B cell (primary cell): ENCODE measurements at regions of chr11 and their contacts with region 1.

Region 1: DNA sequence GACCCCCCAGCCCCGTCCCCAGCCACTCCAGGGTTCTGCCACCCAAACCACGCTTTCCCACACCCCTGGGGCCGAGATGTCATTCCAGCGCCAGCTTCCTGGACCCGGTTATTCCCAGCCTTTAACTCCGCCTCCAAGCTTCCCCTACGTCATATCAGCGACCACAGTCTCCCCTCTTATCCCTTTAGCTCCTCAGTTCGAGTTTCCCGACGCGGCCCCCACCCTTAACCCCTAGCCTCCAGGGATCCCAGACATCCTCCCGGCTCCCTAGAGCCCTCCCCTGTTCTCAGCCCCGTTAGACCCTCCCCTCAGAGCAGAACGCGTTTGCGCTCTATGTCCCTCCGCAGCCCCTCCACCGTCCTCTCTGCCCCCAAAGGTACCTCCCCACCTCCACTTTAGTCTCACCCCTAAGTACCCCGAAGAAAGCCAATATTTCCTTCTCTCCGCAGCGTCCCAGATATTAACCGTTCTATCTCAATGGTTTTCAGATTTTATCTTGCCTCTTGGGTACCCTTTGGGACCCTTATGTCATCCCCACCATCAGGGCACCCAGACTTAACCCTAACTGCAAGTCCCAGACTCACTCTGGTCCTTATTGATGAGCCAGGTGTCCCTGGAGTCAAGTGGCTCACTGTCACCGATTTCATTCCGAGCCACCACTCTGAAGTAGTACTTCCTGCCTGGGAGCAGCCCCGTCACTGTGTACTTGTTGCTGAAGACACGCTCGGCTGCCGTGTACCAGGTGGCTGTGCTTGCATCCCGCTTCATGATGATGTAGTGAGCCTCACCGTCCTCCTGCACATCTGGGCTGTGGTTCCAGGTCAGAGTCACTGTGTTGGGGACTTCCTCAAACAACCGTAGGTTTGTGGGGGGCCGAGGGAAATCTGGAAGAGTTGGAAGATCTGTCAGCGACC is 8.0 kb downstream of the TMEM86A start:
- DNase-seq: peak; percentile 88
- ATAC-seq: peak; percentile 74
- H3K4me3 ChIP-seq: peak overlapping the region in 4 of 5 experiments; percentile 54 to 95 (median 68)
- H3K4me3 Mint-ChIP-seq: peak overlapping the region; percentile 95
- H3K27ac ChIP-seq: peak overlapping the region in 1 of 2 donors; percentile 69
- H3K27ac Mint-ChIP-seq: peak overlapping the region; percentile 88
- H3K4me1 ChIP-seq: peaks cover 18 to 19% of the 10 kb centered on the region in 2 donors
- H3K4me1 Mint-ChIP-seq: peaks cover 22% of the 10 kb centered on the region
- H3K27me3 ChIP-seq: peaks cover 0 to 8% (median 0%) of the 10 kb centered on the region in 4 experiments
- H3K27me3 Mint-ChIP-seq: peaks cover 19% of the 10 kb centered on the region
- CTCF ChIP-seq: no peak

Region 2: DNA sequence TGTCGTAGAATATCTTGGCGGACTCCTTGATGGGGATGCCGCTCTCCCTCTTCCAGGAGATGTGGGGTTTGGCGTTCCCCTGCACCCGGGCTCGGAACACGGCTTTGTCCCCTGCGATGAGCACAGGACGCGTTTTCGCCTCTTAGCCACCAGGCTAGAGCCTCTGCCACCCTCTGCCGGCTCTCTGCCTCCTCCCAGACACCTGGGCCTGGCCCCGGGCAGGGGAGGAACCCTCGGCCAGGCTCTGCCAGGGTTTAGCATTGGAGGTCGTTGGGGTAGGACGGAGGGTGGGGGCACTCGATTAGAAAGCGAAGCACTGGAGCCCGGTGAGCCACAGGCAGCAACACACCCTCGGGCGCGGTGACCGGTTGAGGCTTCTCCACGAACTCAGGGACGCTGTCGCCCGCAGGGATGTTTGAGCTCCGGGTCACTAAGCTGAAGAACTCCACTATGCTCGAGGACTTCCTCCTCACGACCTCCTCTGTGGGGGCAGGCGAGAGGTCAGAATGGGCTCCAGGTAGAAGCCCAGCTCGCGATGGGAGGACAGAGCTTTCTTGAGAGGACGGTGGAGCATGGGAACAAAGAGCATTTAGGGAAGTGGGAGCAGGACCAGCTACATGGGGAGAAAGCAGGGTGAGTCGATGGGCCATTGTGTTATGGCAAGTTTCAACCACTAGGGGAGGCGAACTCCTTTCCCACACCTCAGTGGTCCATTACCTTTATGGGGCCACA is 15.1 kb after region 1 on chr11:
- CTCF ChIA-PET with region 1: interaction called, 27 read pairs
- POLR2A ChIA-PET with region 1: no interaction called
- intact Hi-C with region 1: loop called (anchors 1 kb)
- DNase-seq: peak; percentile 77
- ATAC-seq: peak; percentile 66
- H3K4me3 ChIP-seq: peak overlapping the region; percentile 24 to 80 (median 69)
- H3K4me3 Mint-ChIP-seq: peak overlapping the region; percentile 92
- H3K27ac ChIP-seq: peak overlapping the region in 1 of 2 donors; percentile 11
- H3K27ac Mint-ChIP-seq: peak overlapping the region; percentile 42
- H3K4me1 ChIP-seq: peaks cover 9 to 17% of the 10 kb centered on the region in 2 donors
- H3K4me1 Mint-ChIP-seq: peaks cover 9% of the 10 kb centered on the region
- H3K27me3 ChIP-seq: no peaks in the 10 kb centered on the region
- H3K27me3 Mint-ChIP-seq: peaks cover 6% of the 10 kb centered on the region
- CTCF ChIP-seq: peak; percentile 88

Region 3: GRCh38 chr11:19571906-19572305 is 865.3 kb after region 1 on chr11:
- CTCF ChIA-PET with region 1: no interaction called
- POLR2A ChIA-PET with region 1: no interaction called
- intact Hi-C with region 1: no loop called
- DNase-seq: no peak
- ATAC-seq: no peak
- H3K4me3 ChIP-seq: no peak overlapping the region
- H3K4me3 Mint-ChIP-seq: no peak overlapping the region
- H3K27ac ChIP-seq: no peak overlapping the region
- H3K27ac Mint-ChIP-seq: no peak overlapping the region
- H3K4me1 ChIP-seq: no peaks in the 10 kb centered on the region
- H3K4me1 Mint-ChIP-seq: no peaks in the 10 kb centered on the region
- H3K27me3 ChIP-seq: peaks cover 0 to 14% (median 2%) of the 10 kb centered on the region in 4 experiments
- H3K27me3 Mint-ChIP-seq: peaks cover 12% of the 10 kb centered on the region
- CTCF ChIP-seq: no peak